ENCODE measurements at regions of chr1 and their contacts with region 1.

Region 1: GRCh38 chr1:904310-904950 is 19.3 kb upstream of the SAMD11 start:
- DNase-seq: peak; percentile 88 to 93 (median 90)
- ATAC-seq: peak; percentile 93
- H3K4me3 ChIP-seq: peak overlapping the region; percentile 48
- H3K27ac ChIP-seq: peak overlapping the region; percentile 68; the same call in 2 of the 3 replicates
- H3K4me1 ChIP-seq: peaks cover 12 to 59% of the 10 kb centered on the region in 2 experiments
- H3K27me3 ChIP-seq: peaks cover 7 to 16% of the 10 kb centered on the region in 2 experiments; a peak in 2 of 5 replicates
- CTCF ChIP-seq: peak; percentile 83 to 96 (median 93)
- EP300 ChIP-seq: peak; percentile 37; the same call in 1 of the 2 replicates
- POLR2A ChIP-seq: no peak; the same call in 1 of the 2 replicates
- RAD21 ChIP-seq: peak; percentile 91 to 94

Region 2: DNA sequence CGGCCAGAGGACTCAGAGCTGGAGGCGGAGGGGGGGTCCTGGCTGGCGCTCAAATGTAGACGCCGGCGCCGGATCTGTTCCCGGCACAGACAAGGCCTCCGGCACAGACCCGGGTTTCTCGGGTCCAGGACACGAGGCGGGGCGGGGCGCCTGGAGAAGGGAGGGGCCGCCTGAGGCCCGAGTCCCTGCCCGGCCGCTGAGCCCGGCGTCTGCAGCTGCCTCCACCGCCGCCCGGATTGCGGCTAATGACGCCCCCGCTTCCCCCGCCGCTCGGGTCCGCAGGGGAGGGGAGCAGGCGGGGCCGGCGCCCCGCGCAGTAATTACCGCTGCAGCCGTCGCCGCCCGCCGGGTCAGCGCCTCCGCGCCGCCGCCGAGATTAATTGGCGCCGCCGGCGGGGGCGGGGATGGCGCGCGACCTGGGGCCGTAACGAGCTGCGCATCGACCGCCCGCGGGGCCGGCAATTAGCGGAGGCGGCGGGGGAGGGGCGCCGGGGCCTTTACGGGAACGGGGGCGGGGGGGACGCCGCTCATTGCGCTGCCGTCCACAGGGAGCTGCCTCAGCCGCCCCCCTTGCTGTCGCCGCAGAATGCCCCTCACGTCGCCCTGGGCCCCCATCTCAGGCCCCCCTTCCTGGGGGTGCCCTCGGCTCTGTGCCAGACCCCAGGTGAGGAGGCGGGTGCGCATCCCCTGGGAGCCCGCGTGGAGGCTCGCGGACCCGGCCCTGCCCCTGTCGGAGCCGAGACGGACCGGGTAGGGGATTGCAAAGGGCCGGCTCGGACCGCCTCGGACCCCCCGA is 37.4 kb after region 1 on chr1:
- CTCF ChIA-PET with region 1: interaction called, 12 read pairs
- POLR2A ChIA-PET with region 1: interaction called, 5 read pairs
- in situ Hi-C with region 1: no loop called
- intact Hi-C with region 1: no loop called
- DNase-seq: peak; percentile 83 to 90 (median 88)
- ATAC-seq: peak; percentile 73
- H3K4me3 ChIP-seq: peak overlapping the region; percentile 29
- H3K27ac ChIP-seq: no peak overlapping the region
- H3K4me1 ChIP-seq: peaks cover 28 to 96% of the 10 kb centered on the region in 2 experiments
- H3K27me3 ChIP-seq: peaks cover 0 to 2% of the 10 kb centered on the region in 2 experiments; a peak in 1 of 5 replicates
- CTCF ChIP-seq: no peak
- EP300 ChIP-seq: 0 out of 2 replicates have a peak, but pooled peaks have one; percentile 8
- POLR2A ChIP-seq: no peak
- RAD21 ChIP-seq: no peak

Region 3: GRCh38 chr1:975896-976683 is 71.7 kb after region 1 on chr1:
- CTCF ChIA-PET with region 1: interaction called, 4 read pairs
- POLR2A ChIA-PET with region 1: no interaction called
- in situ Hi-C with region 1: no loop called
- intact Hi-C with region 1: loop called (anchors 2 kb)
- DNase-seq: peak; percentile 51 to 64 (median 55)
- ATAC-seq: peak; percentile 76
- H3K4me3 ChIP-seq: peak overlapping the region; percentile 9; the same call in 1 of the 2 replicates
- H3K27ac ChIP-seq: no peak overlapping the region
- H3K4me1 ChIP-seq: peaks cover 0 to 82% of the 10 kb centered on the region in 2 experiments; a peak in 3 of 5 replicates
- H3K27me3 ChIP-seq: peaks cover 11 to 67% of the 10 kb centered on the region in 2 experiments; a peak in 4 of 5 replicates
- CTCF ChIP-seq: peak; percentile 63 to 74 (median 70)
- EP300 ChIP-seq: no peak
- POLR2A ChIP-seq: no peak
- RAD21 ChIP-seq: peak; percentile 66 to 74